ENCODE measurements at regions of chr4 and their contacts with region 1.

Region 1: DNA sequence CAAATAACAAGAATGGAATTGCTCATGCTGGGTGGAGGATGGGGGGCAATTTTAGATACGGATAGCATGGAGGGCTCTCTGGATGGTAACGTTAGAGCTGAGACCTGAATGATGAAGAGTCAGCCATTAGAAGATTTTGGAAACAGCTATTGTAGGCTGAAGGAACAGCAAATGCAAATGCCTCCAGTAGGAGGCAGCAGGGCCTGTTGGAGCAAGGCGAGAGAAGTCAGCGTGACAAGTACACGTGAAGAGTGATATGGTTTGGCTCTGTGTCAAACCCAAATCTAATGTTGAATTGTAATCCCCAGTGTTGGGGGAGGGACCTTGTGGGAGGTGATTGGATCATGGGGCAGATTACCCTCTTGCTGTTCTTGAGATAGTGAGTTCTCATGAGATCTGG is 59.3 kb upstream of the SOD3 start:
- DNase-seq: peak; percentile 31
- ATAC-seq: peak; percentile 80
- H3K4me3 Mint-ChIP-seq: no peak overlapping the region
- H3K27ac Mint-ChIP-seq: no peak overlapping the region
- H3K4me1 Mint-ChIP-seq: no peaks in the 10 kb centered on the region
- H3K27me3 Mint-ChIP-seq: peaks cover 9% of the 10 kb centered on the region; the same call in 1 of the 2 replicates
- CTCF ChIP-seq: peak; percentile 28; the same call in 1 of the 2 replicates

Region 2: GRCh38 chr4:24720436-24720835 is 15.6 kb before region 1 on chr4:
- CTCF ChIA-PET with region 1: interaction called, 11 read pairs
- POLR2A ChIA-PET with region 1: no interaction called
- DNase-seq: no peak
- ATAC-seq: no peak
- H3K4me3 Mint-ChIP-seq: no peak overlapping the region
- H3K27ac Mint-ChIP-seq: no peak overlapping the region
- H3K4me1 Mint-ChIP-seq: peaks cover 32% of the 10 kb centered on the region
- H3K27me3 Mint-ChIP-seq: 0 out of 2 replicates have a peak, but pooled peaks cover 9% of the 10 kb centered on the region
- CTCF ChIP-seq: no peak

Region 3: DNA sequence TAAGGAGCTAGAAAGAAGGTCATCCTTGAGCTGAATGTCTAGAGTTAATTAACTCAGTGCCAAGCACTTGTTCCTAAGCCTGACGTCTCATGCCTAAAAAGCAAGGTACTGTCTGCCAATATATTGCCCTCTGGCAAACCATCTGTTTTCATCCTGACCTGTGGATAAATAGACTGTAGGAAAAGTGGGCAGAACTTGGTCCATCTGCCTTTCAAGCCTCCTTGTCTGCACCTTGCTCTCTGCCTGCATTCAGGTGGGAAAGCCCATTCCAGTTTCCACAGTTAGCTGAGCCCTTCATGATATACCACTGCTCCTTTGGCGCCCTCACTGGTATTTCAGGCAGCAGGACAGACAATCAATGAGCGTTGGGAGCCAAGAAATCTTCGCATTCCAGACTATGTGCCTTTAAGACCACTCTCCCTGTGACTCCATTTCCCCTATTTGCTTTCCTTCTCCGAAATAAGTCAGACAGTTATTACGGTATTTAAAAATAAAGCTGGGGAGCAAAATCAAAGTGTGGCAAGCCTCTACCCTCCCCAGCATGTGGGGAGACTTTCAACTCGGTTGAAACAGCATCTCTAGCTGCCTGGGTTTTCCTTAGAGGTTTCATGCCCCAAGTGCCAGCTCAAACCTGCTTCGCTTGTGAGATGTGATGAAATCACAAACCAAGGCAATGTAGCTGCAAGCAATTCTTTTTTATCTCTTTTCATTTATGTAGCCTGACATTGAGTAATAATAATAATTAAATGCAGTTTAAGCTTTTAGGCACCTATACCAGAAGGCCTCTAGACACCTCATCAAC is 179.3 kb after region 1 on chr4:
- CTCF ChIA-PET with region 1: interaction called, 10 read pairs
- POLR2A ChIA-PET with region 1: no interaction called
- DNase-seq: peak; percentile 18
- ATAC-seq: peak; percentile 5
- H3K4me3 Mint-ChIP-seq: no peak overlapping the region
- H3K27ac Mint-ChIP-seq: no peak overlapping the region
- H3K4me1 Mint-ChIP-seq: peaks cover 27% of the 10 kb centered on the region
- H3K27me3 Mint-ChIP-seq: peaks cover 40% of the 10 kb centered on the region
- CTCF ChIP-seq: no peak

Region 4: GRCh38 chr4:24932515-24933225 is 196.6 kb after region 1 on chr4:
- CTCF ChIA-PET with region 1: no interaction called
- POLR2A ChIA-PET with region 1: no interaction called
- DNase-seq: no peak
- ATAC-seq: no peak
- H3K4me3 Mint-ChIP-seq: no peak overlapping the region
- H3K27ac Mint-ChIP-seq: no peak overlapping the region
- H3K4me1 Mint-ChIP-seq: no peaks in the 10 kb centered on the region
- H3K27me3 Mint-ChIP-seq: peaks cover 12% of the 10 kb centered on the region
- CTCF ChIP-seq: no peak